Naive thymus-derived CD4-positive, alpha-beta T cell (primary cell): ENCODE measurements at regions of chr11 and their contacts with region 1.

Region 1: DNA sequence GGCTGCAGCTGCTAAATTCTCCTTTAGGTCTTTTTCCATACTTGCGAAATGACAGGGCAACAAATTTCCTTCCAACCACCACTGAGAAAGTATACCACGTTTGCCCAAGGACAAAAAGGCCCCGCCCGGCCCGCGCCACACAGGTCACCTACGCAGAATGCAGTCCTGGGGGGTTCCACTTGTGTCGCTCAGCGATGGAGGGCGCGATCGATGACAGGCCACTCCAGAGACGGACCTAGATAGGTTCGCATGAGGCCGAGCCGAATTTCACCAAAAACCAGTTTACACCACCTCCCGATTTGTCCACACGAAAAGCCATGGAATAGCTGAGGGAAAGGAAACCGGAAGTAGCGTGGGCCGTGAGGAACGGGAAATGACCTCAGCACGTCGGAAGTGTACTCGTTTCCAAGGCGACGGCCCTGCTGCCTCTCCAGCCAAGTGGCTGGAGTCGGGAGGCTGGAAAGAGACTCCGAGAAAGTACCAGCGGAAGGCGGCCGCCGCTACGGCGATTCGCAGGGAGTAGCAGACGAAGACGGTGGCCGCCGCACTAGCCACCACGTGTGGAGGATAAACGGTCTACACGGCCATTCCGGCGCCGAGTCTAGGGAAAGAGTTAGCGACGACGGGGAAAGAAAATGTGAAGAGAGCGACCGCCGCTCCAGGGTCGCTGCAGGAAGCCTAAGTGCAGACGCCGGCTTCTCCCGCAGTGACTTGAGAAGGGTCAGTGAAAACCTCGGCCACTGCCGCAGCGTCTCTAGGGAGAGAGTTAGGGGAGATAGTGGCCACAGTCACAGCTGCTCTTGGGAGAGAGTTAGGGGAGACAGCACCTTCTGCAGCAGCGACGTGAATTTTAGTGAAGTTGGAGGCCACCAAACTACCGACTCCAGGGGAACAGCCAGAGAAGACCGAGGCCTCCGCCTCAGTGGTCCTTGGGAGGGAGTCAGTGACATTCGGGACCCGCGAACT is at the start of gene ANKRD42:
- DNase-seq: peak; percentile 66 to 90 (median 87)
- ATAC-seq: peak; percentile 84
- H3K4me3 ChIP-seq: peak within 1 kb of the TSS; percentile 89
- H3K4me3 Mint-ChIP-seq: peak within 1 kb of the TSS; percentile 92 to 100 (median 98)
- H3K27ac ChIP-seq: peak within 1 kb of the TSS; percentile 99
- H3K27ac Mint-ChIP-seq: peak within 1 kb of the TSS; percentile 96 to 100 (median 99)
- H3K4me1 ChIP-seq: peaks cover 22 to 29% of the 10 kb centered on the region in 2 donors
- H3K4me1 Mint-ChIP-seq: peaks cover 33 to 61% (median 50%) of the 10 kb centered on the region in 7 donors
- H3K27me3 ChIP-seq: no peaks in the 10 kb centered on the region
- H3K27me3 Mint-ChIP-seq: no peaks in the 10 kb centered on the region
- total RNA-seq, gene ANKRD42: 3.1 to 10.9 (median 7.0) TPM

Region 2: DNA sequence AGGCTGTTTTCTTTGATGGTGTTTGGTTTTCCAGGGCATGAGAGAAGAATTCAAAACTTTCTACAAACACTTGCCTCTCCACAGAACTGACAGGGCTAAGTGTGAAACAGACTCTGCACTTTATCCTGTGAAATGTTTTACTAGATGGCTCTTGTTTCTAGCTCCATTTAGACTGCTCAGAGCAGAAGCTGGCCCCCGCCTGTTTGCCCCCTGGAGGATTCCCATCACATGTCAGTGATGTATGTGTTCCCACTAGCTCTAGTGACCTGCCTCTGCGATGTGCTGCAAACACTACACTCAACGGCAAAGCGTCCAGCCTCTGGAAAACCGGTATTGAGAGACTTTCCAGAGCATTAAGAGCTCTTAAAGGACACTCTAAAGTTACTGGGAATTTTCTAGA is 78.0 kb before region 1 on chr11:
- CTCF ChIA-PET with region 1: no interaction called
- POLR2A ChIA-PET with region 1: no interaction called
- intact Hi-C with region 1: loop called in 1 of 2 experiments (anchors 1 kb)
- DNase-seq: no peak
- ATAC-seq: no peak
- H3K4me3 ChIP-seq: peak overlapping the region; percentile 20
- H3K4me3 Mint-ChIP-seq: peak overlapping the region; percentile 41 to 86 (median 74)
- H3K27ac ChIP-seq: no peak overlapping the region
- H3K27ac Mint-ChIP-seq: peak overlapping the region in 7 of 9 donors; percentile 12 to 98 (median 68)
- H3K4me1 ChIP-seq: peaks cover 27 to 36% of the 10 kb centered on the region in 2 donors
- H3K4me1 Mint-ChIP-seq: peaks cover 9 to 62% (median 56%) of the 10 kb centered on the region in 7 donors
- H3K27me3 ChIP-seq: no peaks in the 10 kb centered on the region
- H3K27me3 Mint-ChIP-seq: no peaks in the 10 kb centered on the region

Region 3: DNA sequence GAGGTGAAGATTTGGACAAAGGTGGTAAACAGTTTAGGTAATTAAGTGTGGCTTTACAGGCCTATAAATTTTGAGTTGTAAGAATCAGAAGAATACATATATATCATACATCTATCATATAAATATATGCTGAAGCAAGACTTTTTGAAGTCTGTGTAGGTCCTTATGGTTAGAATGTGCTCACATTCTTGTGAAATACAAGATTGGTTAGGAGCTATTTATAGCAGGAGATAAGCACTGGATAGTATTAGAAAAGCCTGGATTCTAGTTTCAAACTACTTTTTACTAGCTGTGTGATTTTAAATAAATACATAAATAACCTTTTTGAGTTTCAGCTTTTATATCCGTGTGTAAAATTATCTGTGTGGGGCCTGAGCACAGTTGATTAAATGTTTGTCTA is 42.2 kb after region 1 on chr11:
- CTCF ChIA-PET with region 1: no interaction called
- POLR2A ChIA-PET with region 1: no interaction called
- intact Hi-C with region 1: no loop called
- DNase-seq: no peak
- ATAC-seq: no peak
- H3K4me3 ChIP-seq: no peak overlapping the region
- H3K4me3 Mint-ChIP-seq: no peak overlapping the region
- H3K27ac ChIP-seq: no peak overlapping the region
- H3K27ac Mint-ChIP-seq: no peak overlapping the region
- H3K4me1 ChIP-seq: no peaks in the 10 kb centered on the region
- H3K4me1 Mint-ChIP-seq: no peaks in the 10 kb centered on the region
- H3K27me3 ChIP-seq: no peaks in the 10 kb centered on the region
- H3K27me3 Mint-ChIP-seq: peaks cover 0 to 22% (median 0%) of the 10 kb centered on the region in 5 donors

Region 4: GRCh38 chr11:83285771-83286528 is 92.4 kb after region 1 on chr11 and contains the start of gene CCDC90B:
- CTCF ChIA-PET with region 1: no interaction called
- POLR2A ChIA-PET with region 1: interaction called, 4 read pairs
- intact Hi-C with region 1: loop called (anchors 1 kb)
- DNase-seq: peak; percentile 83 to 97 (median 96)
- ATAC-seq: peak; percentile 93
- H3K4me3 ChIP-seq: peak within 1 kb of the TSS; percentile 93
- H3K4me3 Mint-ChIP-seq: peak within 1 kb of the TSS; percentile 92 to 100 (median 98)
- H3K27ac ChIP-seq: peak within 1 kb of the TSS; percentile 95
- H3K27ac Mint-ChIP-seq: peak within 1 kb of the TSS; percentile 98 to 100 (median 99)
- H3K4me1 ChIP-seq: peaks cover 14 to 23% of the 10 kb centered on the region in 2 donors
- H3K4me1 Mint-ChIP-seq: peaks cover 19 to 52% (median 36%) of the 10 kb centered on the region in 7 donors
- H3K27me3 ChIP-seq: no peaks in the 10 kb centered on the region
- H3K27me3 Mint-ChIP-seq: peaks cover 0 to 11% (median 0%) of the 10 kb centered on the region in 5 donors
- total RNA-seq, gene CCDC90B: 19.1 to 40.8 (median 27.8) TPM